Tibial artery (tissue), 4 donors: ENCODE measurements at regions of chr3 and their contacts with region 1.

Region 1: GRCh38 chr3:188154014-188154808 is at the start of gene LPP:
- DNase-seq: peak; percentile 76 to 90
- H3K4me3 ChIP-seq: peak within 1 kb of the TSS; percentile 68 to 81
- H3K27ac ChIP-seq: peak within 1 kb of the TSS; percentile 95 to 96
- H3K4me1 ChIP-seq: peaks cover 0 to 61% (median 36%) of the 10 kb centered on the region in 4 donors
- H3K27me3 ChIP-seq: no peaks in the 10 kb centered on the region
- CTCF ChIP-seq: no peak

Region 2: GRCh38 chr3:187745201-187746058 is 408.8 kb before region 1 on chr3 and contains the start of gene BCL6:
- intact Hi-C with region 1: loop called (anchors 2 kb)
- DNase-seq: peak; percentile 94 to 96
- H3K4me3 ChIP-seq: peak within 1 kb of the TSS; percentile 75 to 78
- H3K27ac ChIP-seq: peak within 1 kb of the TSS; percentile 93 to 99
- H3K4me1 ChIP-seq: peaks cover 0 to 38% (median 21%) of the 10 kb centered on the region in 4 donors
- H3K27me3 ChIP-seq: no peaks in the 10 kb centered on the region
- CTCF ChIP-seq: no peak

Region 3: GRCh38 chr3:188052169-188053030 is 101.8 kb before region 1 on chr3:
- intact Hi-C with region 1: loop called (anchors 5 kb)
- DNase-seq: peak; percentile 93 to 98
- H3K4me3 ChIP-seq: peak overlapping the region; percentile 39 to 43
- H3K27ac ChIP-seq: peak overlapping the region; percentile 91 to 94
- H3K4me1 ChIP-seq: peaks cover 11 to 52% (median 41%) of the 10 kb centered on the region in 4 donors
- H3K27me3 ChIP-seq: no peaks in the 10 kb centered on the region
- CTCF ChIP-seq: peak; percentile 62 to 67

Region 4: GRCh38 chr3:188108703-188109412 is 45.4 kb before region 1 on chr3:
- intact Hi-C with region 1: no loop called
- DNase-seq: no peak
- H3K4me3 ChIP-seq: no peak overlapping the region
- H3K27ac ChIP-seq: no peak overlapping the region
- H3K4me1 ChIP-seq: no peaks in the 10 kb centered on the region
- H3K27me3 ChIP-seq: no peaks in the 10 kb centered on the region
- CTCF ChIP-seq: no peak

Region 5: DNA sequence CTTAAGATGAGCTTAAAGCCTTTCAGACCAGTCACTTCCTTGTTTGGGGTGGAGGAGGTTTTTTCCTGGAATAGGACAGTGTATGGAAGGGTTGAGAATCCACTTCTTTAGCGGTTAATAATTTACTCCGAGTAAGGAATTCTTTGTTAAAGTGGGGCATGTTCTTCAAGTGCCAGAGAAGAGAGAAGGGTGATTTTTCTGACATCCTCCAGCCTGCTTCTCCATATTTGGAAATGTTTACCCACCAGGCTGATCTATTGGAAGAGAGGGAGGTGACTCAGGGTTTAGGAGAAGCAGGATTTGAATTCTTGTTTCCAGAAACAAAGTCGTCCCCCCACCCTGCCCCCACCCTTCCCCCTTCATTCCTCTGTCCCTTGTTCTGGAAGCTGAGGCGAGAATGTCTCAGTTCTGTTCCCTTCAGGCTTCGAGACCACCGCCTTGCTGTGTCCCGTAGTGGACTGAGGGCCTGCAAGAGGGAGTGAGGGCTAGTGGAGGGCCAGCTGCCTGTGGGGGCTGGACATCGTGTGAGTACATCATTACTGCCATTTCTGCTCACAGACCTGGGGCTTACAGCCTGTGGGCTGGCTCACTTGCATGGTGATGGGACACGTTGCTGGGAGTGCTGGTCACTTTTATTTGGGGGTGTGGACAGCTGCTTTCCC is 58.2 kb after region 1 on chr3:
- intact Hi-C with region 1: loop called (anchors 5 kb)
- DNase-seq: peak; percentile 43 to 79
- H3K4me3 ChIP-seq: peak overlapping the region; percentile 50 to 54
- H3K27ac ChIP-seq: peak overlapping the region; percentile 87 to 94
- H3K4me1 ChIP-seq: peaks cover 0 to 96% (median 42%) of the 10 kb centered on the region in 4 donors
- H3K27me3 ChIP-seq: no peaks in the 10 kb centered on the region
- CTCF ChIP-seq: no peak

Region 6: GRCh38 chr3:188262913-188263683 is 108.9 kb after region 1 on chr3:
- intact Hi-C with region 1: loop called (anchors 5 kb)
- DNase-seq: peak; percentile 60 to 85
- H3K4me3 ChIP-seq: no peak overlapping the region
- H3K27ac ChIP-seq: peak overlapping the region; percentile 90 to 96
- H3K4me1 ChIP-seq: peaks cover 0 to 96% (median 87%) of the 10 kb centered on the region in 4 donors
- H3K27me3 ChIP-seq: no peaks in the 10 kb centered on the region
- CTCF ChIP-seq: peak in 1 of 2 experiments; percentile 25

Region 7: DNA sequence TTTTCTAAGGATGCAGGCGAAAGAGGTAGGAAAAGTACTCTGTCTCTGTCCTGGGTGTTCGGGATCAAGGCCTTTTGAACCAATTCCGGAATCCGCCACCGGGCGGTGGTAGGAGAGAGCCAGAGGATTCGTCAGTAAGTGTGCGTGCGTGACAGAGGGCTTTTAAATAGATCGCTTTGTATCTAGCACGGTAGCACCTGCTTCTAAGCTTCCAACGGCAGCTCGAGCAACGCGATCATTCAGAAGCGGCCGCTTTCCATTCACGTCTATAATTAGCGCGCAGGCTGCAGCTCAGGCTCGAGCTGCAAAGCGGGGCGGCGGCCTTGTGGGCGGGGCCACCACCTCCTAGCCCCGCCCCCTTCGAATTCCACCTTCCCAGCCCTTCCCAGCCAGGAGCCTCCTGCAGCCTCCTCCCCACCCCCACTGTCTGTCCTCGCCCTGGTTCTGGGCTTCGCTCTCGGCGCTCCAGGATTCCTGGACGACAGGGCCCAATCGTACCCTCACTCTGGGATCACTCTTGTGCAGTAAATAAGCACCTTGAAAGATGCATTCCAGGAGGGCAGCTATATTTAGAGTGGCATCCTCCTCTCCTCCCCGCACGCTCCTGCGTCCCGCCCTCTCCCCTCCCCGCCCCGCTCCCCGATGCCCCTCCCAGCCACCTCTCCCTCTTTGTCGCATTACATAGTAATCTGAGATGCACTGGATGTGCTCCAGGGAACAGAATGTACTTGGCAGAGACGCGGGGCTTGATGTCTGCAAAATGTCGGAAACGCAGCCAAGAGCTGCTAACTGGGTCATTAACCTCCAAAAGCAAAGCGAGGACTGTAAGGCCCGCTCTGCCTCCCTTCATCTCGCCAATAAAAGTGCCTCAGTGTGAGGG is 793.4 kb after region 1 on chr3:
- intact Hi-C with region 1: loop called (anchors 10 kb)
- DNase-seq: peak; percentile 98 to 99
- H3K4me3 ChIP-seq: peak overlapping the region; percentile 44 to 56
- H3K27ac ChIP-seq: peak overlapping the region; percentile 86 to 87
- H3K4me1 ChIP-seq: peaks cover 4 to 90% (median 78%) of the 10 kb centered on the region in 4 donors
- H3K27me3 ChIP-seq: no peaks in the 10 kb centered on the region
- CTCF ChIP-seq: peak; percentile 36 to 50